ENCODE measurements at regions of chr11 and their contacts with region 1.

Region 1: GRCh38 chr11:65117216-65118096 is at the start of gene ZNHIT2:
- DNase-seq: peak; percentile 94 to 100 (median 100)
- ATAC-seq: peak; percentile 85
- H3K4me3 ChIP-seq: peak within 1 kb of the TSS; percentile 92
- H3K4me3 Mint-ChIP-seq: peak within 1 kb of the TSS; percentile 91 to 95 (median 92)
- H3K27ac ChIP-seq: peak within 1 kb of the TSS; percentile 99
- H3K27ac Mint-ChIP-seq: peak within 1 kb of the TSS; percentile 86 to 100 (median 96)
- H3K4me1 ChIP-seq: peaks cover 28 to 37% of the 10 kb centered on the region in 2 donors
- H3K4me1 Mint-ChIP-seq: peaks cover 20 to 77% (median 53%) of the 10 kb centered on the region in 7 donors
- H3K27me3 ChIP-seq: no peaks in the 10 kb centered on the region
- H3K27me3 Mint-ChIP-seq: no peaks in the 10 kb centered on the region
- total RNA-seq, gene ZNHIT2: 9.9 to 18.2 (median 11.3) TPM

Region 2: GRCh38 chr11:64742889-64743590 is 374.4 kb before region 1 on chr11:
- CTCF ChIA-PET with region 1: no interaction called
- POLR2A ChIA-PET with region 1: interaction called, 8 read pairs
- intact Hi-C with region 1: loop called (anchors 2 to 10 kb)
- DNase-seq: peak; percentile 60 to 91 (median 78)
- ATAC-seq: peak; percentile 45
- H3K4me3 ChIP-seq: peak overlapping the region; percentile 98
- H3K4me3 Mint-ChIP-seq: peak overlapping the region in 9 of 10 donors; percentile 89 to 99 (median 97)
- H3K27ac ChIP-seq: peak overlapping the region; percentile 97
- H3K27ac Mint-ChIP-seq: peak overlapping the region in 5 of 9 donors; percentile 88 to 100 (median 98)
- H3K4me1 ChIP-seq: peaks cover 9 to 16% of the 10 kb centered on the region in 2 donors
- H3K4me1 Mint-ChIP-seq: peaks cover 18 to 47% (median 39%) of the 10 kb centered on the region in 7 donors
- H3K27me3 ChIP-seq: no peaks in the 10 kb centered on the region
- H3K27me3 Mint-ChIP-seq: no peaks in the 10 kb centered on the region

Region 3: GRCh38 chr11:64924102-64924851 is 193.2 kb before region 1 on chr11 and contains the start of gene PPP2R5B:
- CTCF ChIA-PET with region 1: no interaction called
- POLR2A ChIA-PET with region 1: no interaction called
- intact Hi-C with region 1: loop called in 1 of 2 experiments (anchors 1 kb)
- DNase-seq: peak; percentile 79 to 92 (median 89)
- ATAC-seq: peak; percentile 95
- H3K4me3 ChIP-seq: peak within 1 kb of the TSS; percentile 67
- H3K4me3 Mint-ChIP-seq: peak within 1 kb of the TSS; percentile 89 to 99 (median 96)
- H3K27ac ChIP-seq: peak within 1 kb of the TSS; percentile 81
- H3K27ac Mint-ChIP-seq: peak within 1 kb of the TSS; percentile 95 to 100 (median 98)
- H3K4me1 ChIP-seq: peaks cover 11 to 15% of the 10 kb centered on the region in 2 donors
- H3K4me1 Mint-ChIP-seq: peaks cover 9 to 24% (median 14%) of the 10 kb centered on the region in 7 donors
- H3K27me3 ChIP-seq: no peaks in the 10 kb centered on the region
- H3K27me3 Mint-ChIP-seq: no peaks in the 10 kb centered on the region
- total RNA-seq, gene PPP2R5B: 11.9 to 19.1 (median 18.8) TPM

Region 4: DNA sequence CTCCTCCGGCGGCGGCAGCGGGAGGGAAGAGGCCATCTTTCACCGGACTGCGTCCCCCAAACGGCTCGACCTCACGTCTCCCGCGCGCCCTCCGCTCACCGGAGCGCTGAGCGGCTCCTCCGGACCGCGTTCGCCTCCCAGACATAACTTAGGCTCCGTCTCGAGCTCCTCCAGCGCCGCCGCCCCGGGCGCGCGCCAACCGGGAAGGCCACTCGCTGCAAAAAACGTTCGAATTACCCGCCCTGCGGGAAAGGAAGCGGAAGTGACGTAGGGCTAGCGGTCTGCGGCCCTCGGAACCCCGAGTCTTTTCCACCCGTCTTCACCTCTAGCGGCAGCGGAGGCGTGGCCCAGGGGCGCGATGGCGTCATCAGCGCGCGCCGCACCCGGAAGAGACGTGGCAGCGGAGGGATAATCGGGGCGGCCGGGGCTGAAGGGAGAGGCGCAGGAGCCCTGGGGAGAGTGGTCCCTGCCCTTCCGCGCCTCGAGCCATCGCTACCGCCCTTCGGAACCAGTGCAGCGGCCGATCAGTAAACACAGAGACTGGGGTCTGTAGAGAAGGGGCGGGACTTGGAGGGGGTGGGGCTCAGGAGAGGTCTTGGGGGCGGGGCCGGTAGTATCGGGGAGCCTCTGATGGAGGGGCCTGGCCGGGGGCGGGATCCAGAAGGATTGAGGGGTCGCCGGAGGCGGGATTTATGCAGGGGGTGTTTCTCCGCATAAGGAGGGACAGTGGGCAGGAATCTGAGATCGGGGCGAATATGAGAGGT is 33.4 kb before region 1 on chr11 and contains the starts of genes CDCA5 and ZFPL1:
- CTCF ChIA-PET with region 1: interaction called, 3 read pairs
- POLR2A ChIA-PET with region 1: interaction called, 22 read pairs
- intact Hi-C with region 1: loop called (anchors 1 kb)
- DNase-seq: peak; percentile 94 to 98 (median 97)
- ATAC-seq: peak; percentile 96
- H3K4me3 ChIP-seq: peak within 1 kb of the TSS; percentile 61
- H3K4me3 Mint-ChIP-seq: peak within 1 kb of the TSS; percentile 88 to 99 (median 93)
- H3K27ac ChIP-seq: peak within 1 kb of the TSS; percentile 86
- H3K27ac Mint-ChIP-seq: peak within 1 kb of the TSS; percentile 94 to 99 (median 97)
- H3K4me1 ChIP-seq: peaks cover 13 to 14% of the 10 kb centered on the region in 2 donors
- H3K4me1 Mint-ChIP-seq: peaks cover 20 to 49% (median 27%) of the 10 kb centered on the region in 7 donors
- H3K27me3 ChIP-seq: no peaks in the 10 kb centered on the region
- H3K27me3 Mint-ChIP-seq: peaks cover 0 to 4% (median 0%) of the 10 kb centered on the region in 5 donors
- total RNA-seq, gene CDCA5: 0.56 to 68.1 (median 0.81) TPM
- total RNA-seq, gene ZFPL1: 29.9 to 53.0 (median 49.3) TPM

Region 5: GRCh38 chr11:65180877-65181568 is 63.6 kb after region 1 on chr11:
- CTCF ChIA-PET with region 1: interaction called, 3 read pairs
- POLR2A ChIA-PET with region 1: interaction called, 9 read pairs
- intact Hi-C with region 1: loop called (anchors 1 to 2 kb)
- DNase-seq: peak in 8 of 9 donors; percentile 41 to 71 (median 45)
- ATAC-seq: peak; percentile 85
- H3K4me3 ChIP-seq: peak overlapping the region; percentile 67
- H3K4me3 Mint-ChIP-seq: peak overlapping the region; percentile 80 to 94 (median 90)
- H3K27ac ChIP-seq: peak overlapping the region; percentile 93
- H3K27ac Mint-ChIP-seq: peak overlapping the region; percentile 36 to 91 (median 84)
- H3K4me1 ChIP-seq: peaks cover 6 to 8% of the 10 kb centered on the region in 2 donors
- H3K4me1 Mint-ChIP-seq: peaks cover 7 to 30% (median 22%) of the 10 kb centered on the region in 7 donors
- H3K27me3 ChIP-seq: no peaks in the 10 kb centered on the region
- H3K27me3 Mint-ChIP-seq: peaks cover 0 to 22% (median 0%) of the 10 kb centered on the region in 5 donors

Region 6: DNA sequence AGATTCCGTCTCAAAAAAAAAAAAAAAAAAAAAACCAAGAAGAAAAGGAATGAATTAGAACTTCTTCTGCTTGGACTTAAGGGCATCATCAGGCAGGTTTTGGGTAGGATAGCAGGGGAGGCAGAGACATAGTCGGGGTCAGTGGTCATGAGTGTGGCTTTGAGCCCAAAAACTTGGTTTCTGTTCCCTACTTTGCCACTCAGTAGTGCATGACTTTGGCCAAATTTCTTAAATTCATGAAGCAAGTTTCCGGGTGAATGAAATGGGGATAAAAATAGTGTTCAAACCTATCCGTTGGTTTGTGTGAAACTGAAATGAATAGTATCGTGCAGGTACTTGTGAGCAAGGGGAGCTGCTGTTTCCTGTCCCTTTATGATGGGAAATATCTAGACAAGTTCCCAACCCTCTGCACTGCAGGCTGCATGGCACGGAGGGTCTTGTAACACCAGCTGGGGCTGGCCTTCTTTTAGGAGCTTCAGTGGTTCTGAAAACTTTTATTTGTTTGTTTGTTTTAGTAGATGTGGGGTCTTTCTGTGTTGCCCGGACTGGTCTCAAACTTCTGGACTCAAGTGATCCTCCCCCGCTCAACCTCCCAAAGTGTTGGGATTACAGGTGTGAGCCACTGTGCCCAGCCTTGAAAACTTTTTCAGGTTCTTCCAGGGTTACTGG is 323.5 kb after region 1 on chr11:
- CTCF ChIA-PET with region 1: no interaction called
- POLR2A ChIA-PET with region 1: no interaction called
- intact Hi-C with region 1: no loop called
- DNase-seq: peak in 1 of 9 donors; percentile 12
- ATAC-seq: peak; percentile 45
- H3K4me3 ChIP-seq: no peak overlapping the region
- H3K4me3 Mint-ChIP-seq: peak overlapping the region in 8 of 10 donors; percentile 29 to 71 (median 43)
- H3K27ac ChIP-seq: peak overlapping the region; percentile 3
- H3K27ac Mint-ChIP-seq: peak overlapping the region in 8 of 9 donors; percentile 64 to 90 (median 81)
- H3K4me1 ChIP-seq: peaks cover 0 to 12% of the 10 kb centered on the region in 2 donors
- H3K4me1 Mint-ChIP-seq: peaks cover 17 to 71% (median 53%) of the 10 kb centered on the region in 7 donors
- H3K27me3 ChIP-seq: no peaks in the 10 kb centered on the region
- H3K27me3 Mint-ChIP-seq: no peaks in the 10 kb centered on the region

Region 7: GRCh38 chr11:66344550-66345315 is 1227.3 kb after region 1 on chr11 and contains the start of gene BRMS1:
- CTCF ChIA-PET with region 1: no interaction called
- POLR2A ChIA-PET with region 1: no interaction called
- intact Hi-C with region 1: loop called in 1 of 2 experiments (anchors 1 kb)
- DNase-seq: peak; percentile 85 to 98 (median 93)
- ATAC-seq: peak; percentile 94
- H3K4me3 ChIP-seq: peak within 1 kb of the TSS; percentile 73
- H3K4me3 Mint-ChIP-seq: peak within 1 kb of the TSS; percentile 94 to 98 (median 96)
- H3K27ac ChIP-seq: peak within 1 kb of the TSS; percentile 92
- H3K27ac Mint-ChIP-seq: peak within 1 kb of the TSS; percentile 91 to 98 (median 96)
- H3K4me1 ChIP-seq: peaks cover 30 to 36% of the 10 kb centered on the region in 2 donors
- H3K4me1 Mint-ChIP-seq: peaks cover 25 to 62% (median 52%) of the 10 kb centered on the region in 7 donors
- H3K27me3 ChIP-seq: no peaks in the 10 kb centered on the region
- H3K27me3 Mint-ChIP-seq: peaks cover 0 to 4% (median 0%) of the 10 kb centered on the region in 5 donors
- total RNA-seq, gene BRMS1: 35.9 to 50.8 (median 48.4) TPM

Measured in naive thymus-derived CD4-positive, alpha-beta T cell (primary cell).